CD8-positive, alpha-beta T cell (primary cell): ENCODE measurements at regions of chr10 and their contacts with region 1.

Region 1: DNA sequence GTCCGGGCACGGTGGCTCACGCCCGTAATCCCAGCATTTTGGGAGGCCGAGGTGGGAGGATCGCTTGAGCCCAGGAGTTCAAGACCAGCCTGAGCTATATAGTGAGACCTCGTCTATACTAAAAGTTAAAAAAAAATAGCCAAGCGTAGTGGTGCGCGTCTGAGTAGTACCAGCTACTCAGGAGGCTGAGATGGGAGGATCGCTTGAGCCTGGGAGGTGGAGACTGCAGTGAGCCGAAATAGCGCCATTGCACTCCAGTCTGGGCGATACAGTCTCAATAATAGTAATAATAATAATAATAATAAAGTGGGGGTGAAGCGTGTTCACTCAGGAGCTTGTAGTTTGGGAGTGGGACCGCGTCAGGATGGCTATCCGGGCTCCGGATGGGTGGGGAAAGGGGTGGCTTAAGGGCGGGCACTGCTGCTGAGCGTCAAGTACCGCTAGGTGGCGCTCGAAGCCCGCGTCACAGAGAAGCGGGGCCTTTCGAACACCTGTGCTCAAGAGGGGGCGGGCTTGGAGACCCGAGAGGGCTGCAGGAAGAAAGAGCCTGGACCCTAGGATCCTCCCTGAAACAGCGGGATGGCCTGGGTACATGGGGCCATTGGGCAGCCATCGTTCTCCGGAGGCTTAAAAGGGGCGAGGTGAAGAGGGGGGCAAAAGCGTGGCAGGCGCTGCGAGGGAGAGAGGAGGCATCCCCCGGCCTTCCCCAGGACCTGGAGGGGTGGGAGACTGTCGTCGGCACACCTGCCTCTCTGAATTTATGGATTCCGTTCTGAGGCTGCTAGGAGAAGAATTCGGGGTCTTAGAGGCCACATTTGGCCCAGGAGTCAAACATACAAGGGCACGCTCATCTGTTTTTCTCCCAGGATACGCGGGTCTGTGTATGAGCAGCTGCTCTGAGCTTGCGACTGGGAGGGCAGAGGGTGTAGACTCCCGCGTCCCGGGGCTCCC is 14.5 kb downstream of the LBX1 start:
- DNase-seq: peak; percentile 50 to 84 (median 74)
- ATAC-seq: peak; percentile 78
- H3K4me3 ChIP-seq: no peak overlapping the region
- H3K4me3 Mint-ChIP-seq: peak overlapping the region; percentile 68
- H3K27ac ChIP-seq: no peak overlapping the region
- H3K27ac Mint-ChIP-seq: no peak overlapping the region
- H3K4me1 ChIP-seq: peaks cover 40% of the 10 kb centered on the region
- H3K4me1 Mint-ChIP-seq: peaks cover 29% of the 10 kb centered on the region
- H3K27me3 ChIP-seq: peaks cover 46 to 59% of the 10 kb centered on the region in 2 experiments
- H3K27me3 Mint-ChIP-seq: peaks cover 64% of the 10 kb centered on the region
- CTCF ChIP-seq: peak; percentile 77

Region 2: DNA sequence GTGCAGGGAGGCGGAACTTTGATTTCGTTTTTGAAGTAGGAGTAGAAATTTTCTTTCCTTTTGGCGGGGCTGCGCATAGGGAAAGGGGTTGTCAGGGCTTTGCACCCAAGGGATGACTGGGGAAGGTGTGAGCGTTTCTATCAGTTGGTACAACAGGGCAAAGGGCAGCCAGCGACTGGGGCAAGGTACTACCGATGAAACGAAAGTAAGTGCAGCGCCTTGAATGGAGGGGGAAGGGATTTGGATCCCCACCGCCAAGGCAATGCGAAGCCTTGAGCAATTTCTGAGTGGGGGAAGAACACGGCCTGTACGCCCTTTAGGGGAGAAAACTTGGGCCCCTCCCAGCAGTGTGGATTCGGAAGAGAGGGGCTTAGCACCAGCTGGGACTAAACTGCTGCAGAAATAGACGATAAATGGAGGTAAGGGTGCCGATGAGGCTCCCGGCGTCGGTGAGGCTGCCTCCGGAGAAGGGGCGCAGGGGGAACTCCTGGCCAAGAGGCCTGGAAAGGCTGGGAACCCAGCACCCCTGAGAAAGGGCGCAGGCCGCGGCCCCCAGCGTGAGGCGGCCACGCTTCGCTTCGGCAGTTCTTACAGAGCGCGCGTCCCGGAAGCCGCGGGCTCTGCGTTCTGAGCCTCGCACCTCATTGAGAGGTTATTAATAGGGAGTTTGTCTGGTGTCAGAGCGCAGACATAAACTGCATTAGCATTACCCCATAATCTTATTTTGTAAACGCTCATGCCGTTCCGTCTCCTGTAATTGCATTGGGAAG is 93.7 kb before region 1 on chr10:
- CTCF ChIA-PET with region 1: no interaction called
- POLR2A ChIA-PET with region 1: no interaction called
- intact Hi-C with region 1: no loop called
- DNase-seq: peak in 8 of 9 experiments; percentile 19 to 67 (median 46)
- ATAC-seq: peak; percentile 78
- H3K4me3 ChIP-seq: peak overlapping the region; percentile 54 to 63
- H3K4me3 Mint-ChIP-seq: peak overlapping the region; percentile 98
- H3K27ac ChIP-seq: no peak overlapping the region
- H3K27ac Mint-ChIP-seq: peak overlapping the region; percentile 37
- H3K4me1 ChIP-seq: peaks cover 27% of the 10 kb centered on the region
- H3K4me1 Mint-ChIP-seq: peaks cover 28% of the 10 kb centered on the region
- H3K27me3 ChIP-seq: peaks cover 16 to 36% of the 10 kb centered on the region in 2 experiments
- H3K27me3 Mint-ChIP-seq: peaks cover 48% of the 10 kb centered on the region
- CTCF ChIP-seq: no peak

Region 3: GRCh38 chr10:101238732-101239105 is 24.0 kb after region 1 on chr10:
- CTCF ChIA-PET with region 1: interaction called, 100 read pairs
- POLR2A ChIA-PET with region 1: no interaction called
- intact Hi-C with region 1: loop called in 1 of 2 experiments (anchors 1 kb)
- DNase-seq: peak in 2 of 9 experiments; percentile 42 to 51
- ATAC-seq: peak; percentile 58
- H3K4me3 ChIP-seq: no peak overlapping the region
- H3K4me3 Mint-ChIP-seq: no peak overlapping the region
- H3K27ac ChIP-seq: no peak overlapping the region
- H3K27ac Mint-ChIP-seq: no peak overlapping the region
- H3K4me1 ChIP-seq: peaks cover 24% of the 10 kb centered on the region
- H3K4me1 Mint-ChIP-seq: peaks cover 18% of the 10 kb centered on the region
- H3K27me3 ChIP-seq: peaks cover 33 to 51% of the 10 kb centered on the region in 2 experiments
- H3K27me3 Mint-ChIP-seq: peaks cover 74% of the 10 kb centered on the region
- CTCF ChIP-seq: peak; percentile 64

Region 4: GRCh38 chr10:101291331-101292193 is 76.8 kb after region 1 on chr10:
- CTCF ChIA-PET with region 1: interaction called, 60 read pairs
- POLR2A ChIA-PET with region 1: no interaction called
- intact Hi-C with region 1: loop called (anchors 1 kb)
- DNase-seq: peak; percentile 31 to 76 (median 53)
- ATAC-seq: peak; percentile 74
- H3K4me3 ChIP-seq: peak overlapping the region; percentile 16 to 54
- H3K4me3 Mint-ChIP-seq: peak overlapping the region; percentile 79
- H3K27ac ChIP-seq: no peak overlapping the region
- H3K27ac Mint-ChIP-seq: no peak overlapping the region
- H3K4me1 ChIP-seq: peaks cover 22% of the 10 kb centered on the region
- H3K4me1 Mint-ChIP-seq: peaks cover 12% of the 10 kb centered on the region
- H3K27me3 ChIP-seq: peaks cover 32 to 36% of the 10 kb centered on the region in 2 experiments
- H3K27me3 Mint-ChIP-seq: peaks cover 71% of the 10 kb centered on the region
- CTCF ChIP-seq: peak; percentile 77

Region 5: GRCh38 chr10:101441541-101442455 is 227.1 kb after region 1 on chr10:
- CTCF ChIA-PET with region 1: interaction called, 37 read pairs
- POLR2A ChIA-PET with region 1: no interaction called
- intact Hi-C with region 1: loop called (anchors 1 to 2 kb)
- DNase-seq: peak in 2 of 9 experiments; percentile 43 to 61
- ATAC-seq: peak; percentile 89
- H3K4me3 ChIP-seq: no peak overlapping the region
- H3K4me3 Mint-ChIP-seq: no peak overlapping the region
- H3K27ac ChIP-seq: no peak overlapping the region
- H3K27ac Mint-ChIP-seq: no peak overlapping the region
- H3K4me1 ChIP-seq: no peaks in the 10 kb centered on the region
- H3K4me1 Mint-ChIP-seq: peaks cover 6% of the 10 kb centered on the region
- H3K27me3 ChIP-seq: no peaks in the 10 kb centered on the region
- H3K27me3 Mint-ChIP-seq: no peaks in the 10 kb centered on the region
- CTCF ChIP-seq: peak; percentile 55

Region 6: DNA sequence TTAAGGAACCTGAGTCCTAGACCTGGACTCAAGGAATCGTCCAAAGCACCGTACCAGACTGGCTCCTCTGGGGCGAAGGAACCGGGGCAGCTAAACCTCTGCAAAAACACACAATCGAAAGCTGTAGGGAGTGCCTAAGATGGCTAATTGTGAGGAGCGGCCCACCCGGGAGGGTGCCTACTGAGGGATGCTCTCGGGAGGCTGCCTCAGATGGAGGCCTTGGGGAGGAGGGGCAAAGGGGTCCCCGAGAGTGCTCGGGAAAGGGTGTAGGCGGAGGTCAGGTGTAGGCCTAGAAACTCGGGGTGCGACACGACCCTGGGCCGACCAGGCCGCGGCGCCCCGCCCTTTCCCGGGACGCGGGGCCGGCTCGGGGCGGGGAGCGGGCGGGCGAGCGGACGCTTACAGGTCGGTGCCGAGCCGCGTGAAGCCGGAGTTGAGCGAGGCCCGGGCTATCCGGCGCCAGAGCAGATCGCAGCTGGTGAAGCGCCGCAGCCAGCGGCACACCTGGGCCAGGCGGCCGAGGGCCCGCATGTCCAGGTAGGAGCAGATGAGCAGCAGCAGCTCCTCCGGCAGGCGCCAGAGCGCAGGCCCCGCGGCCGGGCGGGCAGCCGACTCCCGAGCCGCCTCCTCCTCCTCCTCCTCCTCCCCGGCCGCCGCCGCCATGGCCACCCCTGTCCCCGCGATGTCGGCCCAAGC is 479.4 kb after region 1 on chr10:
- CTCF ChIA-PET with region 1: no interaction called
- POLR2A ChIA-PET with region 1: no interaction called
- intact Hi-C with region 1: loop called in 1 of 2 experiments (anchors 10 kb)
- DNase-seq: peak; percentile 42 to 83 (median 70)
- ATAC-seq: peak; percentile 66
- H3K4me3 ChIP-seq: peak overlapping the region; percentile 85 to 88
- H3K4me3 Mint-ChIP-seq: peak overlapping the region; percentile 97
- H3K27ac ChIP-seq: peak overlapping the region; percentile 97 to 99
- H3K27ac Mint-ChIP-seq: peak overlapping the region; percentile 99
- H3K4me1 ChIP-seq: peaks cover 36% of the 10 kb centered on the region
- H3K4me1 Mint-ChIP-seq: peaks cover 48% of the 10 kb centered on the region
- H3K27me3 ChIP-seq: no peaks in the 10 kb centered on the region
- H3K27me3 Mint-ChIP-seq: no peaks in the 10 kb centered on the region
- CTCF ChIP-seq: no peak

Region 7: DNA sequence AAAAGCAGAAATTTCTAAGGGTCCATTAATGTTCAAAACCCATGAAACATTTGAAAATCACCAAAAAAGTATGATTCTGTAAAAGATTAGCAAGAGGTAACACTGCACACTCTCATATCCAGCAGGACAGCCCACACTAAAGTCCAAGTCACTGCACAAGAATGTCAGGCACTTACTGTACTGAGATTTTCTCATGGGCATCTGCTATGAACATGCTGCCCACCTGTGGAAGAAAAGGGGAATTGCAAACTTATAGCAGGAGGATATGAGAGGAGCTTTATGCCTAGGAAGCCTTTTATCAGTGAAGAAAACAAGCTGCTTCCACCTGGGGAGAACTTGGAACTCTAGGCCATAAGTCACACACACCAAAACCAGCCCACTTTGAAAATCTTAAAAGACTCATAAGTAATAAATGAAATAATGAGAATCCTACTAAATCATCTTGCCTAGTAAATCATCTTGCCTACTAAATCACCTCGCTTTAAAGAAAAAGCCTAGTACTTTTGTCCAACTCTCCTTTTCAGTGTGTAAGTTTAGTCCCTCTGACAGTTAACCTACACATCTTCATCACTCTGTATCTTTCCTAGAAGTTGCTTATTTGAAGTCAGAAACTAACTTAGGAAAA is 795.2 kb after region 1 on chr10:
- CTCF ChIA-PET with region 1: no interaction called
- POLR2A ChIA-PET with region 1: no interaction called
- intact Hi-C with region 1: loop called in 1 of 2 experiments (anchors 5 kb)
- DNase-seq: peak in 7 of 9 experiments; percentile 19 to 72 (median 35)
- ATAC-seq: peak; percentile 94
- H3K4me3 ChIP-seq: no peak overlapping the region
- H3K4me3 Mint-ChIP-seq: no peak overlapping the region
- H3K27ac ChIP-seq: no peak overlapping the region
- H3K27ac Mint-ChIP-seq: no peak overlapping the region
- H3K4me1 ChIP-seq: no peaks in the 10 kb centered on the region
- H3K4me1 Mint-ChIP-seq: peaks cover 2% of the 10 kb centered on the region
- H3K27me3 ChIP-seq: no peaks in the 10 kb centered on the region
- H3K27me3 Mint-ChIP-seq: no peaks in the 10 kb centered on the region
- CTCF ChIP-seq: peak; percentile 82